HepG2 (cell line): ENCODE measurements at regions of chr16 and their contacts with region 1.

Region 1: GRCh38 chr16:30997000-30997886 is 12.2 kb downstream of the HSD3B7 start:
- DNase-seq: peak; percentile 79
- ATAC-seq: peak; percentile 70
- H3K4me3 ChIP-seq: peak overlapping the region; percentile 84 to 89 (median 84)
- H3K27ac ChIP-seq: peak overlapping the region; percentile 93
- H3K4me1 ChIP-seq: peaks cover 87% of the 10 kb centered on the region
- H3K27me3 ChIP-seq: no peaks in the 10 kb centered on the region
- CTCF ChIP-seq: peak; percentile 43
- EP300 ChIP-seq: 0 out of 4 replicates have a peak, but pooled peaks of 1 of the 2 experiments have one; percentile 1
- POLR2A ChIP-seq: peak; percentile 83 to 87
- RAD21 ChIP-seq: 0 out of 2 replicates have a peak, but pooled peaks have one; percentile 48

Region 2: GRCh38 chr16:31016018-31016417 is 18.8 kb after region 1 on chr16:
- CTCF ChIA-PET with region 1: no interaction called
- POLR2A ChIA-PET with region 1: interaction called, 41 read pairs
- in situ Hi-C with region 1: no loop called
- intact Hi-C with region 1: loop called (anchors 2 kb)
- DNase-seq: peak; percentile 82
- ATAC-seq: peak; percentile 92
- H3K4me3 ChIP-seq: no peak overlapping the region
- H3K27ac ChIP-seq: no peak overlapping the region
- H3K4me1 ChIP-seq: peaks cover 17% of the 10 kb centered on the region
- H3K27me3 ChIP-seq: peaks cover 2 to 19% of the 10 kb centered on the region in 2 experiments
- CTCF ChIP-seq: peak; percentile 94
- EP300 ChIP-seq: no peak
- POLR2A ChIP-seq: no peak
- RAD21 ChIP-seq: peak; percentile 86

Region 3: GRCh38 chr16:31050280-31051030 is 53.2 kb after region 1 on chr16:
- CTCF ChIA-PET with region 1: no interaction called
- POLR2A ChIA-PET with region 1: interaction called, 10 read pairs
- in situ Hi-C with region 1: no loop called
- intact Hi-C with region 1: no loop called
- DNase-seq: no peak
- ATAC-seq: peak; percentile 33
- H3K4me3 ChIP-seq: no peak overlapping the region
- H3K27ac ChIP-seq: no peak overlapping the region
- H3K4me1 ChIP-seq: peaks cover 23% of the 10 kb centered on the region
- H3K27me3 ChIP-seq: peaks cover 0 to 3% of the 10 kb centered on the region in 2 experiments; a peak in 1 of 5 replicates
- CTCF ChIP-seq: no peak
- EP300 ChIP-seq: no peak
- POLR2A ChIP-seq: no peak
- RAD21 ChIP-seq: no peak

Region 4: GRCh38 chr16:31117391-31118197 is 120.4 kb after region 1 on chr16 and contains the start of gene KAT8:
- CTCF ChIA-PET with region 1: no interaction called
- POLR2A ChIA-PET with region 1: interaction called, 37 read pairs
- in situ Hi-C with region 1: no loop called
- intact Hi-C with region 1: no loop called
- DNase-seq: peak; percentile 99
- ATAC-seq: peak; percentile 93
- H3K4me3 ChIP-seq: peak within 1 kb of the TSS; percentile 67 to 83 (median 81)
- H3K27ac ChIP-seq: peak within 1 kb of the TSS; percentile 70
- H3K4me1 ChIP-seq: peaks cover 36% of the 10 kb centered on the region
- H3K27me3 ChIP-seq: no peaks in the 10 kb centered on the region; a peak in 1 of 5 replicates
- CTCF ChIP-seq: peak; percentile 10; the same call in 1 of the 2 replicates
- EP300 ChIP-seq: 0 out of 4 replicates have a peak, but pooled peaks of 1 of the 2 experiments have one; percentile 8
- POLR2A ChIP-seq: peak; percentile 80 to 94
- RAD21 ChIP-seq: peak; percentile 24; the same call in 1 of the 2 replicates
- total RNA-seq, gene KAT8: 69.5 and 79.0 TPM in 2 replicates

Region 5: GRCh38 chr16:31458844-31459721 is 461.8 kb after region 1 on chr16 and contains the start of gene ARMC5:
- CTCF ChIA-PET with region 1: no interaction called
- POLR2A ChIA-PET with region 1: interaction called, 7 read pairs
- in situ Hi-C with region 1: loop called (anchors 5 kb)
- intact Hi-C with region 1: no loop called
- DNase-seq: peak; percentile 98
- ATAC-seq: peak; percentile 76
- H3K4me3 ChIP-seq: peak within 1 kb of the TSS; percentile 71 to 98 (median 83)
- H3K27ac ChIP-seq: peak within 1 kb of the TSS; percentile 95
- H3K4me1 ChIP-seq: peaks cover 48% of the 10 kb centered on the region
- H3K27me3 ChIP-seq: no peaks in the 10 kb centered on the region; a peak in 1 of 5 replicates
- CTCF ChIP-seq: peak; percentile 90
- EP300 ChIP-seq: no peak; a peak in 1 of 4 replicates
- POLR2A ChIP-seq: peak; percentile 87 to 97
- RAD21 ChIP-seq: peak; percentile 63
- total RNA-seq, gene ARMC5: 13.0 and 22.3 TPM in 2 replicates